Ovary (tissue), 10 donors: ENCODE measurements at regions of chr3 and their contacts with region 1.

Region 1: DNA sequence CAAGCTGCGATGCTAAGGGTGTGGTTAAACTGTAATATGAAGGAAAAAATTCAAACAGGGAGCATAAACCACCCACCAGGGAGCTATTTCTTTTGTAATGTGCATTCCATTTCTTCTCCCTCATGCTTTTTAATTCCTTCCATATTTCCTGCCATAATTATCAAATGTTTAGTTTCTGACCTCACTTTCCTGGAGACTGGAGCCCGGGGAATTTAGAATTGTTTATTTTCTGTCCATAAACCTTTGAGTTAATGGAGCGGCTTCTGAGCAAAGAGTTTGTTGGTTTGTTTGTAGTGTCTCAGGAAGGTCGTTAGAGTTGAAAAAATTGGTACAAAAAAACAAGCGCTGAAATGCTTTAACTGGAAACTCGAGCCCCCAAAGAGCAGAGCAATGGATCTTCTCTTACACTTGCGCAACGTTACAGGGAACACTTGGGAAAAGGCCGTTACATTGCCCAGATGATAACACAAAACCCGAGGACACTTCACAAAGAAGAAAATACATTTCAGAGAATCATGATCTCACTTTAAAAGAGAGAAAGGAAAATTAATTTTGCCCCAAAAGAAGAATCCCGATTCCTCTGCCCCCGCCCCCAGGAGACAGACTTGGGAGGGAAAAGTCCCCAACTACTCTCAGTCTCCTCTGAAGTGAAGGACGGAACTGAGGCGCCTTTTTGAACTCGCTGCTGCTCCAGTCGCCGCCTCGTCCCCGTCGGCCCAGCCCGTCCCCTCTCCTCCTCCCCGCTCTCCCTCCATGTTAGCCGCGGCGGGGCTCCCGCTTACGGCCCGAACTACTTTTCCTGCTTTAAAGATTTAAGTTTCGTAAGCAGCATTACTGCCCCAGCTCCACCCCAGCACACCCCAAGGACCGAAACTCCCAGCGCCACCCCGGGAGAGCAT is 842 bp downstream of the FSTL1 start:
- DNase-seq: peak in 3 of 5 donors; percentile 43 to 56 (median 50)
- H3K4me3 ChIP-seq: peak overlapping the region; percentile 89
- H3K27ac ChIP-seq: peak overlapping the region; percentile 80 to 85
- H3K4me1 ChIP-seq: peaks cover 16% of the 10 kb centered on the region
- H3K27me3 ChIP-seq: no peaks in the 10 kb centered on the region
- CTCF ChIP-seq: no peak
- EP300 ChIP-seq: no peak
- POLR2A ChIP-seq: no peak

Region 2: GRCh38 chr3:120604784-120605183 is 154.8 kb after region 1 on chr3:
- intact Hi-C with region 1: loop called in 1 of 4 experiments (anchors 5 kb)
- DNase-seq: no peak
- H3K4me3 ChIP-seq: no peak overlapping the region
- H3K27ac ChIP-seq: no peak overlapping the region
- H3K4me1 ChIP-seq: no peaks in the 10 kb centered on the region
- H3K27me3 ChIP-seq: no peaks in the 10 kb centered on the region
- CTCF ChIP-seq: no peak
- EP300 ChIP-seq: no peak
- POLR2A ChIP-seq: no peak